Heart left ventricle (tissue), 16 donors: ENCODE measurements at regions of chr1 and their contacts with region 1.

Region 1: GRCh38 chr1:37595440-37596319 is at the start of gene GNL2:
- DNase-seq: peak; percentile 97 to 99 (median 98)
- ATAC-seq: peak; percentile 100
- H3K4me3 ChIP-seq: peak within 1 kb of the TSS; percentile 61 to 88 (median 74)
- H3K27ac ChIP-seq: peak within 1 kb of the TSS in 11 of 12 donors; percentile 50 to 84 (median 75)
- H3K4me1 ChIP-seq: peaks cover 2 to 24% (median 16%) of the 10 kb centered on the region in 12 donors
- H3K27me3 ChIP-seq: no peaks in the 10 kb centered on the region
- CTCF ChIP-seq: no peak
- POLR2A ChIP-seq: peak in 1 of 2 donors; percentile 78
- total RNA-seq, gene GNL2: 19.4 to 29.7 (median 23.8) TPM

Region 2: DNA sequence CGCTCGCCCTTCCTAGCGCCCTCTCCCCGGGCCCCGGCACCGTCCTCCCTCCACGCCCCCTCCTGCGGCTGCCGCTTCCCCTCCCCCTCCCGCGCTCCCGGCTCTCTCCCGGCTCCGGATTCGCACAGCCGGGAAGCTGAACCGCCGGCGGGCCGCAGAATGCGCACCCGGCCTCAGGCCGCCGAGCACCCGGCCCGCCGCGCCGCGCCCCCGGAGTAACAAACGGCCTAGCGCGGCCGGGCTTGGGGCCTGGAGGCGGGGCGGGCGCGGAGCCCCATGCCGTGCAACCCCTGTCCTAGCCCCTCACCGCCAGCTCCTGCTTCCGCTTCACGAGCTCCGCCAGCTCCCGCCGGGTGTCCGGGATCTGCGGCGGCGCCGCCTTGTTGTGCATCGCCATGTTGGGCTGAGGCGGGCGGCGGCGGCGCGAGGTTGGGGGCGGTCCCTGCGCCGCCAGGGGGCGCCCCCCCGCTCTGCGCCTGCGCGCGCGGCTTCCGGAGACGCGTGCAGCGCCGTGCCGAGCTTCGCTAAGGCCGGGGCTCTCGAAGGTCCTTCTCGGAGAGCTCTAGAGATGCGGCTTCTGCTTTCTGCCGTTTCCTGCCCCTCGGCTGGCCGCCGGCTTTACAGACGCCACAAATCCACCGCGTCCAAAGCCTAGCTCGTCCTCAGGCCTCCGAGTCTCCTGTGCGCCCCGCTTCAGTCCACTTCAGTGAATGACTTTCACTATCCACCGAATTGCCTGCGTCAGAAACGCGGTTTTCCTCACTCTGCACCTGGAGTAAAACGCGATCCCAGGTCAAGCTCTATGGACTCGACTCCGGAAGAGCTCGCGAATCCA is 81.1 kb before region 1 on chr1 and contains the start of gene MEAF6:
- intact Hi-C with region 1: loop called in 1 of 10 experiments (anchors 2 kb)
- DNase-seq: peak; percentile 84 to 93 (median 88)
- ATAC-seq: peak; percentile 83 to 99 (median 98)
- H3K4me3 ChIP-seq: peak within 1 kb of the TSS; percentile 77 to 100 (median 88)
- H3K27ac ChIP-seq: peak within 1 kb of the TSS; percentile 80 to 99 (median 95)
- H3K4me1 ChIP-seq: peaks cover 0 to 30% (median 20%) of the 10 kb centered on the region in 12 donors
- H3K27me3 ChIP-seq: no peaks in the 10 kb centered on the region
- CTCF ChIP-seq: peak; percentile 41 to 96 (median 80)
- POLR2A ChIP-seq: peak in 1 of 2 donors; percentile 78
- total RNA-seq, gene MEAF6: 28.9 to 51.3 (median 39.6) TPM

Region 3: GRCh38 chr1:37553927-37554808 is 41.5 kb before region 1 on chr1 and contains the start of gene SNIP1:
- intact Hi-C with region 1: loop called in 1 of 10 experiments (anchors 5 kb)
- DNase-seq: peak; percentile 91 to 94 (median 93)
- ATAC-seq: peak; percentile 95 to 97 (median 96)
- H3K4me3 ChIP-seq: peak within 1 kb of the TSS; percentile 76 to 100 (median 95)
- H3K27ac ChIP-seq: peak within 1 kb of the TSS; percentile 68 to 94 (median 86)
- H3K4me1 ChIP-seq: peaks cover 6 to 49% (median 32%) of the 10 kb centered on the region in 12 donors
- H3K27me3 ChIP-seq: no peaks in the 10 kb centered on the region
- CTCF ChIP-seq: no peak
- POLR2A ChIP-seq: peak in 1 of 2 donors; percentile 72
- total RNA-seq, gene SNIP1: 6.8 to 11.2 (median 9.0) TPM

Region 4: GRCh38 chr1:37634244-37634991 is 38.7 kb after region 1 on chr1 and contains the start of gene RSPO1:
- intact Hi-C with region 1: no loop called
- DNase-seq: peak in 1 of 5 donors; percentile 47
- ATAC-seq: peak in 2 of 4 donors; percentile 25 to 34
- H3K4me3 ChIP-seq: peak within 1 kb of the TSS in 9 of 12 donors; percentile 2 to 39 (median 27)
- H3K27ac ChIP-seq: no peak within 1 kb of the TSS
- H3K4me1 ChIP-seq: peaks cover 0 to 18% (median 0%) of the 10 kb centered on the region in 12 donors
- H3K27me3 ChIP-seq: peaks cover 41 to 97% (median 68%) of the 10 kb centered on the region in 9 donors
- CTCF ChIP-seq: no peak
- POLR2A ChIP-seq: no peak
- total RNA-seq, gene RSPO1: 13.2 TPM in 1 of 9 donors, not detected in the others

Region 5: DNA sequence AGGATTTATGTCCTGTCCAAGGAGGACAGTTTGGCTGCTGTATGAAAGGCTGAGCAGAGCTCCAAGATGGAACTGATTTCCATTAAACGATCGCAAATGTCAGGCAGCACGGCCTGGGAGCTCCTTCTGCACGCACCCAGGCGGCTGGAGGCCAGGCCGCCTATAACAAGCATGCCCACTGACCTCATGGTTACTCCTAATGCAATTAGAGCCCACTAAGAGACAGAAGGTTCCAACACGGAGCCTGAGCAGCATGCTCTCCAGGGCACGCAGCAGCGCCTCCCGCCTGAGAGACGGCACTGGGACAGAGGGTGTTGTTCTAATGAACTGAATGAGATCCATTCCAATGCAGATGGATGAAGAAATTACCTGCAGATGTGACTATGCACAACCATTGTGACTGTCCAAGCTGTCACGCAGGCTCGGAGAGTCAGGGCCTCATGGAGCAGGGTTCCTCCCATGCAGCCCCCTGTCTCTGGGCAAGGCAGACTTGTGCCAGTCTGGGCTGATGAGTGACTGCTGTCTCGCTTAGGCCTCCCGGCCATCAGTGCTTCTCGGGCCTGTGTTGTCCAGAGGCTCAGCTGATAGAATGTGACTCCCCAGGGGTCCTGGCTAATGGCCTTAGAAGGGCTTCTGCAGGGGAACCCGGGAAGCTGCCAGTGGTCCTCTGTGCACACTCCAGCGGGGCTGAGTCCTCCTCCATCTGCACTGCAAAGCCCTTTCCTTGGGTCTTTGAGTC is 71.5 kb after region 1 on chr1:
- intact Hi-C with region 1: no loop called
- DNase-seq: no peak
- ATAC-seq: no peak
- H3K4me3 ChIP-seq: no peak overlapping the region
- H3K27ac ChIP-seq: no peak overlapping the region
- H3K4me1 ChIP-seq: no peaks in the 10 kb centered on the region
- H3K27me3 ChIP-seq: peaks cover 0 to 53% (median 5%) of the 10 kb centered on the region in 9 donors
- CTCF ChIP-seq: no peak
- POLR2A ChIP-seq: no peak

Region 6: DNA sequence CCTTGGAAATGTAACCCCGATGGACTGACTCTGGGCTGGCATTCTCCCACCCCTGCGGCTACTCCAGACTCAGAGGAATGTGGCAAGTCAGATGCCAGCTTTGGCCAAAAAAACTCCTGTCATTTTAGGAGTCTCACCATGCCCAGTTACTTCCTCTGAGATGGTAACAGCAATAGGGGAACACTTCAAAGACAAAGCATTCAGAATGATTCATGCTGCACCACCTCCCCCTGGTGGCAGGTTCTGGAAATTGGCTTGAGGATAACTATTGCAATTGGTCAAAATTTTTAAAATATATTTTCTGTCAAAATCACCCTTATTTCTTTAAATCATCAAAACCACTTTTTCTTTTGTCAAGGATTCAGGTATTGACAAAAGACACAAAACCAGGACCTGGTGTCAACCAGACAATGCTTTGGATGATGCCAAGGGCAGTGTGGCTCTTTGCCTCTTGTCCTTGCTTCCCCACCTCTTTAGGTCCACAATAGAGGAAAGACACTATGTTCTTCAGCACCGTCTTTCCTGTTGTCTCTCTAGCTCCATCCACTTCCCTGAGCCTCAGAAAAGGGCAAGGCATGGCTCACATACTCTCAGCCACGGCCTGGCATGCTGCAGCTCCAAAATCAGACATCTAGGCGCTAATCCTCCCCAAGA is 86.8 kb after region 1 on chr1:
- intact Hi-C with region 1: loop called in 6 of 10 experiments (anchors 2 to 5 kb)
- DNase-seq: peak in 4 of 5 donors; percentile 47 to 69 (median 56)
- ATAC-seq: peak; percentile 58 to 78 (median 67)
- H3K4me3 ChIP-seq: no peak overlapping the region
- H3K27ac ChIP-seq: no peak overlapping the region
- H3K4me1 ChIP-seq: peaks cover 0 to 3% (median 0%) of the 10 kb centered on the region in 12 donors
- H3K27me3 ChIP-seq: no peaks in the 10 kb centered on the region
- CTCF ChIP-seq: peak; percentile 78 to 96 (median 84)
- POLR2A ChIP-seq: no peak

Region 7: DNA sequence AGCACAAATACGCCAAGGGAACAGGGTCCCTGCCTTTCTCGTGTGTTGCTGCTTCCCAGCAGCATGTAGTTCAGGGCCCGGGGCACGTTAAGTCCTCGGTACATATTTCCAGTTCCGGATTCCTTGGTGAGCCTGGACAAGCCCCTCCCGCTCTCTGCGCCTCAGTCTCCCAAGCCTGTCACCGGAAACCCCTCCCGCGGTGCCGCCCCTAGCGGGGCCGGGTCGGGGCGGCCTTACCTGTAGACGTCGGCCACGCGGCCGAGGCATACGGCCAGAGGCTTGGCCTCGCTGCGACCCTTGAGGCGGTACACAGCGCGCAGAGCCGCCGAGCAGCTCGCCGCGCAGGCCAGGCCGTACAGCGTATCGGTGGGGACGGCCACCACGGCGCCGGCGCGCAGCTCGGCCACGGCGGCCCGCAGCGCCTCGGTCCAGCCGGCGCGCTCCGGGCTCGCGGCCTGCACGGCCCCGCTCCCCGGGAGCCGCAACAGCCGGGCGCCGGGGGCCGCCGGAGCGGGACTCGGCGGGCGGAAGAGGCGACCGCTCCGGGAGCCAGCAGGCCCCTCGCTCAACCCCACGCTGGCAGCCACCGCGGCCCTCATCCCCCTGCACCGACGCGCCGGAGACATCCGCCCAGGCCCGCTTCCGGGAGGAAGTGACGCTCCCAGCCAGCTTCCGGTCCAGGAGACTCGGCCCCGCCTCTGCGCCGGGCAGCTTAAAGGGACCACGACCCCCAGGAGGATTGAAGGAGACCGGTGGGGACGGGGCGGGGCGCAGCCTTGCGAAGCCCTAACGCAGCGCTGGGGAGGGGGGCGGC is 212.1 kb after region 1 on chr1 and contains the starts of genes C1orf122 and YRDC:
- intact Hi-C with region 1: loop called in 1 of 10 experiments (anchors 10 kb)
- DNase-seq: peak; percentile 94 to 97 (median 96)
- ATAC-seq: peak; percentile 91 to 96 (median 96)
- H3K4me3 ChIP-seq: peak within 1 kb of the TSS; percentile 72 to 99 (median 91)
- H3K27ac ChIP-seq: peak within 1 kb of the TSS; percentile 90 to 99 (median 96)
- H3K4me1 ChIP-seq: peaks cover 8 to 41% (median 28%) of the 10 kb centered on the region in 12 donors
- H3K27me3 ChIP-seq: no peaks in the 10 kb centered on the region
- CTCF ChIP-seq: no peak
- POLR2A ChIP-seq: peak in 1 of 2 donors; percentile 72
- total RNA-seq, gene C1orf122: 29.1 to 93.0 (median 44.0) TPM
- total RNA-seq, gene YRDC: 4.0 to 8.9 (median 6.1) TPM